Activated CD8-positive, alpha-beta T cell treated with anti-CD3 and anti-CD28 coated beads for 36 hours (primary cell): ENCODE measurements at regions of chr22 and their contacts with region 1.

Region 1: DNA sequence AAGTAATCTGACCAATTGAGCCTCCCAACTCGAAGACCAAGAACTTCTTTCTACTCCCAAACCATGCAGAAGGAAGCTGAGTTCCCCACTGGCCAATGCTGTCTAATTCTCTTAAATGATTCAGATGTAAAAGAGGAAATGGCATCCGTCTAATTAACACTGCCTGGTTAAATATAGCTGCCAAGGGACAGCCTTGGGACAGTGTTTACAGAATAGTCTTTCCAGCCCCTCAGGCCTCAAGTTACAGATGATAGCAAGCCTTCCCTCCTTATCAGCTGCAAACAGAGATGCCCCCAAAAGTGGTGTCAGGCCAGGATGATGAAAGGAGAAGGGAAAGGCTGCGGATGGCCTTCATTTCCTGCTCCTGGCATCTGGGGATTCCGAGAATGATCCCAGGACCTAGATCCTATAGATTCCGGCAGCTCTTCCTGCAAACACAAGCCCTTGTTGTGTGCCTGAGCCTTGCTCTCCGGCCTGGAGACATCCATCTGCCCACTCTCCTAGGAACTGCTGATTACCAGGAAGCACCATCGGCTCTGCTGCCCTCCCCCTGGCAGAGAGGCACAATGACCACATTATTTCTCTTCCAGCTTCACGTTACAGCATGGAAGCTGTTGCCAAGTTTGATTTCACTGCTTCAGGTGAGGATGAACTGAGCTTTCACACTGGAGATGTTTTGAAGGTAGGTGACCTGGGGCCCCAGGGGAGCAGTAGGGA is 13.5 kb upstream of the TMA7B start:
- DNase-seq: peak; percentile 37
- ATAC-seq: no peak
- H3K4me3 Mint-ChIP-seq: peak overlapping the region; percentile 60
- H3K27ac Mint-ChIP-seq: peak overlapping the region; percentile 90
- H3K4me1 Mint-ChIP-seq: peaks cover 96% of the 10 kb centered on the region
- H3K27me3 Mint-ChIP-seq: no peaks in the 10 kb centered on the region
- CTCF ChIP-seq: no peak

Region 2: DNA sequence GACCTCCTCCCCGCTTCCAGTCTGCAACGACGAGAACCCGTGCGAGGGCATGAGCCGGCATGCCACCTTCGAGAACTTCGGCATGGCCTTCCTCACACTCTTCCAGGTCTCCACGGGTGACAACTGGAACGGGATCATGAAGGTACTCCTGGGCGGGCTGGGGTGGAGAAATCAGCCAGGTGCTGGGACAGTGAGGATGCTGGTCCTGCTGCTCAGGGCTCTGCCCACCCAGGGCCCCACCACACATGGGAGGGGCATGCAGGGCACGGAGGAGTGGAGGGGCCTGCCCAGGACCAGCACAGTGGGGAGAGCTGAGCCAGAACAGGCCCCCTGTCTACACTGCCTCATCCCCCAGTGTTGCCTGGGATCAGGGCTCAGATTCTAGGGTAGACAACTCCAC is 268.7 kb before region 1 on chr22:
- CTCF ChIA-PET with region 1: no interaction called
- POLR2A ChIA-PET with region 1: no interaction called
- intact Hi-C with region 1: no loop called
- DNase-seq: no peak
- ATAC-seq: no peak
- H3K4me3 Mint-ChIP-seq: no peak overlapping the region
- H3K27ac Mint-ChIP-seq: no peak overlapping the region
- H3K4me1 Mint-ChIP-seq: no peaks in the 10 kb centered on the region
- H3K27me3 Mint-ChIP-seq: no peaks in the 10 kb centered on the region
- CTCF ChIP-seq: no peak

Region 3: DNA sequence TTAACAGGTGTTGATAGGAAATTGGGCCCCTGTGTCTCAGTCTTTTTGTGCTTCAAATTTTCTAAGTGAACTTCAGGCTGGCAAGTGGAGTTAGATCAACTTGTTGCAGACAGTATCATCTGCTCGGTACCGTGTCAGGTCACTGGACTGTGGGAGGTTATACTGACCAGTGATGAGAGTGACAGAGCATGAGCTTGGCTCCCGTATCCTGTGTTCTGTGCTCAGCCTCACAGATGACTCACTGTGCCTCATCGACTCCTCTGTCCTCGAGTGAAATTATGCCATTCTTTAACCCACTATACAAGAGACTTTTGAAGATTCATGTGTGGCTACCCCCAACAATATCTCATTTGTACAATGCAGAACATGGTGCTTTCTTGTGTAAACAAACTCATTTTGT is 37.9 kb before region 1 on chr22:
- CTCF ChIA-PET with region 1: interaction called, 14 read pairs
- POLR2A ChIA-PET with region 1: interaction called, 15 read pairs
- intact Hi-C with region 1: loop called (anchors 5 kb)
- DNase-seq: peak; percentile 66
- ATAC-seq: peak; percentile 55
- H3K4me3 Mint-ChIP-seq: peak overlapping the region; percentile 80
- H3K27ac Mint-ChIP-seq: peak overlapping the region; percentile 92
- H3K4me1 Mint-ChIP-seq: peaks cover 61% of the 10 kb centered on the region
- H3K27me3 Mint-ChIP-seq: no peaks in the 10 kb centered on the region
- CTCF ChIP-seq: no peak

Region 4: DNA sequence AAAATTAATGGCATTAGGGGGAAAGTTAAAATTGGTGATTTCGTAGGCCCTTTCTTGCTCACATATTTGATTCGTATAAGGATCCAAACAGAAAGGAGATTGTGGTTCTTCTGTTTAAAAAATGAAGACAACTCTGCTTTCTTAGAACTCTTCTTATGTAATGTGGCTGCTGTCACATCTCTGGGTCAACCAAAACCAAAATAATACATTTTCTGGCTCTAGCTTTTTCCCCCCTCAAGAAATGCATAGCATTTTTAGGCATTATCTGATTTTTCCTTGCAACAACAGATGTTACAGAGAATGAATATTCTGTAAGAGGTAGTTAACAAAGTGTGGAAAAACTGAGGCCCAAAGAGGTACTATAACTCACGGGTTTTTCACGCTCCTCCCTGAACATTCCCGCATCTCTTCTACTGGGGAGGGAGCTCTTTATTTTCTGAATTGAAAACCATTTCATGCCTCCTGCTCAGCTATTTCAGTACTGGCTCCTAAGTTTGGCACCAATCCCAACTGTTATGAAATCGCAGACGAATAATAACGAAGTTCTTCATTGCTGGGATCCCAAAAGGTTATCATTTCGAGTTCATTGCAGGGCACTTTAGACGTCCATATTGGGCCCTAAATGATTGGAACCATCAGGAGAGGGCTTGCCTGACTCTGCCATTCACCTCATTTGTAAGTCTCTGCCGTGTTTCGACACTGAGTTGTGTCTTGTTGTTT is 28.7 kb before region 1 on chr22:
- CTCF ChIA-PET with region 1: interaction called, 4 read pairs
- POLR2A ChIA-PET with region 1: interaction called, 13 read pairs
- intact Hi-C with region 1: no loop called
- DNase-seq: no peak
- ATAC-seq: no peak
- H3K4me3 Mint-ChIP-seq: peak overlapping the region; percentile 80
- H3K27ac Mint-ChIP-seq: peak overlapping the region; percentile 92
- H3K4me1 Mint-ChIP-seq: peaks cover 79% of the 10 kb centered on the region
- H3K27me3 Mint-ChIP-seq: no peaks in the 10 kb centered on the region
- CTCF ChIP-seq: no peak

Region 5: GRCh38 chr22:39927544-39927943 is 19.1 kb before region 1 on chr22:
- CTCF ChIA-PET with region 1: interaction called, 34 read pairs
- POLR2A ChIA-PET with region 1: interaction called, 23 read pairs
- intact Hi-C with region 1: no loop called
- DNase-seq: peak; percentile 73
- ATAC-seq: peak; percentile 45
- H3K4me3 Mint-ChIP-seq: no peak overlapping the region
- H3K27ac Mint-ChIP-seq: no peak overlapping the region
- H3K4me1 Mint-ChIP-seq: peaks cover 30% of the 10 kb centered on the region
- H3K27me3 Mint-ChIP-seq: no peaks in the 10 kb centered on the region
- CTCF ChIP-seq: peak; percentile 67

Region 6: GRCh38 chr22:39932918-39933649 is 13.6 kb before region 1 on chr22:
- CTCF ChIA-PET with region 1: interaction called, 34 read pairs
- POLR2A ChIA-PET with region 1: interaction called, 23 read pairs
- intact Hi-C with region 1: no loop called
- DNase-seq: peak; percentile 81
- ATAC-seq: peak; percentile 67
- H3K4me3 Mint-ChIP-seq: peak overlapping the region; percentile 72
- H3K27ac Mint-ChIP-seq: peak overlapping the region; percentile 90
- H3K4me1 Mint-ChIP-seq: peaks cover 50% of the 10 kb centered on the region
- H3K27me3 Mint-ChIP-seq: no peaks in the 10 kb centered on the region
- CTCF ChIP-seq: peak; percentile 92

Region 7: GRCh38 chr22:39960791-39961746 is 14.4 kb after region 1 on chr22:
- CTCF ChIA-PET with region 1: interaction called, 8 read pairs
- POLR2A ChIA-PET with region 1: interaction called, 17 read pairs
- intact Hi-C with region 1: no loop called
- DNase-seq: peak; percentile 94
- ATAC-seq: peak; percentile 95
- H3K4me3 Mint-ChIP-seq: peak overlapping the region; percentile 22
- H3K27ac Mint-ChIP-seq: peak overlapping the region; percentile 80
- H3K4me1 Mint-ChIP-seq: peaks cover 74% of the 10 kb centered on the region
- H3K27me3 Mint-ChIP-seq: no peaks in the 10 kb centered on the region
- CTCF ChIP-seq: no peak

Region 8: GRCh38 chr22:40036591-40037225 is 90.0 kb after region 1 on chr22:
- CTCF ChIA-PET with region 1: no interaction called
- POLR2A ChIA-PET with region 1: no interaction called
- intact Hi-C with region 1: no loop called
- DNase-seq: peak; percentile 75
- ATAC-seq: peak; percentile 87
- H3K4me3 Mint-ChIP-seq: no peak overlapping the region
- H3K27ac Mint-ChIP-seq: no peak overlapping the region
- H3K4me1 Mint-ChIP-seq: no peaks in the 10 kb centered on the region
- H3K27me3 Mint-ChIP-seq: peaks cover 5% of the 10 kb centered on the region
- CTCF ChIP-seq: peak; percentile 87